ENCODE measurements at regions of chr1 and their contacts with region 1.

Region 1: GRCh38 chr1:47725992-47726855 is 271.0 kb downstream of the TRABD2B start:
- DNase-seq: peak; percentile 7
- ATAC-seq: peak; percentile 98
- H3K4me3 ChIP-seq: no peak overlapping the region
- H3K27ac ChIP-seq: no peak overlapping the region
- H3K4me1 ChIP-seq: no peaks in the 10 kb centered on the region
- H3K27me3 ChIP-seq: peaks cover 5 to 6% of the 10 kb centered on the region in 2 experiments
- CTCF ChIP-seq: peak; percentile 87 to 93 (median 91)
- EP300 ChIP-seq: no peak
- POLR2A ChIP-seq: no peak
- RAD21 ChIP-seq: peak; percentile 68

Region 2: DNA sequence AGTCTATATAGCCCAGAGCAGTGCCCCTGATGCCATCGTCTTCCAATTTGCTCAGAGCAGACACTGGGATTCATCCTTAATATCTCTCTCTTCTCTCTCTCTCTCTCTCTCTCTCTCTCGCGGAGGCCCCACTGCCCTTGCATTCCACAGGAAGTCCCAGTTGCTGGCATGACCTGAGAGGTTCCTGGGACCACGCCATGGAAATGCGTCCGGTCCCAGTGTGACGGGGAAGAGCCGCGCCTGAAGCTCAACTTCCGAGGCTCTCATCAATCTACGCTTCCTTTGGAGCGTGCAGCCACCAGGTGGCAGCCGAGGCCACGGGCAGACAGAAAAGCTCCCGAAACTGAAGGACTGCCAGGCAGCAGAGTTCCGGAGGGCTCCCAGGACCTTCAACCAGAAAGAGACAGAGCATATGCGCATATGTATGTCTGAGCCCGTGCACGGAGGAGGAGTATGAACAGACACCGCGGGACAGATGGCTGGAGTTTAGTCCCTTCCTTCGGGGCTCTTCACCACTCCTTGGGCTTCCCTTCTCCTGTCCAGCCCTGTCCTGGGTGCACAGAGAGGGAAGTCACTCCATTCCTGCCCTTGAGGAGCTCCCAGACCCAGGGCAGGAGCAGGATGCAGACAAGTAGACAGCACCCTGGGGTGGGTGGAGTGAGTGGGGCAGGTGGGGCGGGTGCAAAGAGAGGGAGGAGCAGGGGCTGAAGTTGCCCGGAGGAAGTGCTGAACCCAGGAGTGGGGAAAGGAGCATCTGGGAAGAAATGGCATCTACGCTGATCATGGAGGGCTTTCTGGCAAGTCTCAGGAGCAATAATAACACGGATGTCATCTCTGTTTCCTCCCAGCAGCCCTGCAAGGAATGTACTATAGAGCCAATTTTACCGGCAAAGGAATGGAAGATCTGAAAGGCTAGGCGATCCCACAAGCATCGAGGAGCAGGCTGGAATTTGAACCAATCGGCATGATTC is 546.9 kb before region 1 on chr1:
- CTCF ChIA-PET with region 1: interaction called, 12 read pairs
- POLR2A ChIA-PET with region 1: no interaction called
- RAD21 ChIA-PET with region 1: no interaction called
- SMC1A ChIA-PET with region 1: no interaction called
- in situ Hi-C with region 1: no loop called
- intact Hi-C with region 1: loop called (anchors 1 kb)
- DNase-seq: peak; percentile 60
- ATAC-seq: peak; percentile 92
- H3K4me3 ChIP-seq: peak overlapping the region; percentile 60; the same call in 1 of the 2 replicates
- H3K27ac ChIP-seq: no peak overlapping the region
- H3K4me1 ChIP-seq: peaks cover 3% of the 10 kb centered on the region; the same call in 1 of the 2 replicates
- H3K27me3 ChIP-seq: no peaks in the 10 kb centered on the region
- CTCF ChIP-seq: peak; percentile 93 to 97 (median 95); a peak in 5 of 6 replicates
- EP300 ChIP-seq: no peak
- POLR2A ChIP-seq: peak; percentile 61
- RAD21 ChIP-seq: peak; percentile 68

Region 3: GRCh38 chr1:47388891-47389238 is 337.4 kb before region 1 on chr1:
- CTCF ChIA-PET with region 1: interaction called, 33 read pairs
- POLR2A ChIA-PET with region 1: no interaction called
- RAD21 ChIA-PET with region 1: interaction called, 14 read pairs
- SMC1A ChIA-PET with region 1: interaction called, 8 read pairs
- in situ Hi-C with region 1: no loop called
- intact Hi-C with region 1: loop called (anchors 1 kb)
- DNase-seq: no peak
- ATAC-seq: peak; percentile 95
- H3K4me3 ChIP-seq: no peak overlapping the region
- H3K27ac ChIP-seq: no peak overlapping the region
- H3K4me1 ChIP-seq: no peaks in the 10 kb centered on the region
- H3K27me3 ChIP-seq: no peaks in the 10 kb centered on the region
- CTCF ChIP-seq: peak; percentile 76 to 89 (median 79)
- EP300 ChIP-seq: no peak
- POLR2A ChIP-seq: no peak
- RAD21 ChIP-seq: peak; percentile 67

Region 4: GRCh38 chr1:47432071-47433036 is 293.9 kb before region 1 on chr1:
- CTCF ChIA-PET with region 1: interaction called, 22 read pairs
- POLR2A ChIA-PET with region 1: no interaction called
- RAD21 ChIA-PET with region 1: interaction called, 23 read pairs
- SMC1A ChIA-PET with region 1: interaction called, 12 read pairs
- in situ Hi-C with region 1: no loop called
- intact Hi-C with region 1: loop called (anchors 5 kb)
- DNase-seq: peak; percentile 34
- ATAC-seq: peak; percentile 62
- H3K4me3 ChIP-seq: peak overlapping the region; percentile 54; the same call in 1 of the 2 replicates
- H3K27ac ChIP-seq: peak overlapping the region; percentile 38
- H3K4me1 ChIP-seq: peaks cover 23% of the 10 kb centered on the region
- H3K27me3 ChIP-seq: no peaks in the 10 kb centered on the region
- CTCF ChIP-seq: peak; percentile 77 to 81 (median 80)
- EP300 ChIP-seq: no peak
- POLR2A ChIP-seq: no peak
- RAD21 ChIP-seq: peak; percentile 54; the same call in 1 of the 2 replicates

Region 5: DNA sequence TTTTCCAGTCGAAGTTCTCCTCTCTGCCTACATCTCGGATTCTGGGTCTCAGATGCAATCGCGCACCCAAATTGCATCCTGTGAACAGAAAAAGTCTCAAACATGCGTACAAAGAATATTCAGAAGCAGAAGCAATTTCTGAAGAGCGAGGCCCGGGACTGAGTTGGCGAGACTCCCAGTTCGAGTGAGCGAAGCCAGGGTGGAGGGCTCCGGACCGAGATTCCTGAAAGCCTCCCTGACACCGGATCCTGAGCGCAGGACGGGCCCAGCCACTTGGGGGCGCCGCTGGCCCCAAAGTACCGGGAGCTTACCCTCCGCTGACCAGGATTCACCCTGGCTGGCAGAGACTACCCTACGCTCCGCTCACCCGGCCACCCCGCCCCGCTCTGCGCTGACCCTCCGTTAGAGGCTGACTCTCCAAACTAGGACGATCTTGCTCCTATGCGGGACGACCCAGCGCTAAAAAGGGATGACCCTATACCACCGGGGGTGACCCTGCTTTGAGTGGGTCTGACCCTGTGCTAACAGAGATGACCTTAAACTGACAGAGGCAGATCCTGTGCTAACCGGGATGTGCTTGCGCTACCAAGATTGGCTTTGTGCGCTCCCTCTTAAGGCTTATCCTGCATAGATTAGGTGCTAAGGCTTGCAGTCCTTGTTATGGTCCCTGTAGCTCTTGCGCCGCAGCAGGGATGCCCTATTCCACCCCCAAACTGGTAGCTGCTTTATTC is 276.2 kb before region 1 on chr1:
- CTCF ChIA-PET with region 1: interaction called, 11 read pairs
- POLR2A ChIA-PET with region 1: no interaction called
- RAD21 ChIA-PET with region 1: interaction called, 4 read pairs
- SMC1A ChIA-PET with region 1: no interaction called
- in situ Hi-C with region 1: no loop called
- intact Hi-C with region 1: no loop called
- DNase-seq: no peak
- ATAC-seq: no peak
- H3K4me3 ChIP-seq: no peak overlapping the region
- H3K27ac ChIP-seq: no peak overlapping the region
- H3K4me1 ChIP-seq: no peaks in the 10 kb centered on the region; the same call in 1 of the 2 replicates
- H3K27me3 ChIP-seq: peaks cover 17 to 21% of the 10 kb centered on the region in 2 experiments
- CTCF ChIP-seq: peak; percentile 27 to 38 (median 32); a peak in 2 of 6 replicates
- EP300 ChIP-seq: no peak
- POLR2A ChIP-seq: no peak
- RAD21 ChIP-seq: peak; percentile 8; the same call in 1 of the 2 replicates

Region 6: DNA sequence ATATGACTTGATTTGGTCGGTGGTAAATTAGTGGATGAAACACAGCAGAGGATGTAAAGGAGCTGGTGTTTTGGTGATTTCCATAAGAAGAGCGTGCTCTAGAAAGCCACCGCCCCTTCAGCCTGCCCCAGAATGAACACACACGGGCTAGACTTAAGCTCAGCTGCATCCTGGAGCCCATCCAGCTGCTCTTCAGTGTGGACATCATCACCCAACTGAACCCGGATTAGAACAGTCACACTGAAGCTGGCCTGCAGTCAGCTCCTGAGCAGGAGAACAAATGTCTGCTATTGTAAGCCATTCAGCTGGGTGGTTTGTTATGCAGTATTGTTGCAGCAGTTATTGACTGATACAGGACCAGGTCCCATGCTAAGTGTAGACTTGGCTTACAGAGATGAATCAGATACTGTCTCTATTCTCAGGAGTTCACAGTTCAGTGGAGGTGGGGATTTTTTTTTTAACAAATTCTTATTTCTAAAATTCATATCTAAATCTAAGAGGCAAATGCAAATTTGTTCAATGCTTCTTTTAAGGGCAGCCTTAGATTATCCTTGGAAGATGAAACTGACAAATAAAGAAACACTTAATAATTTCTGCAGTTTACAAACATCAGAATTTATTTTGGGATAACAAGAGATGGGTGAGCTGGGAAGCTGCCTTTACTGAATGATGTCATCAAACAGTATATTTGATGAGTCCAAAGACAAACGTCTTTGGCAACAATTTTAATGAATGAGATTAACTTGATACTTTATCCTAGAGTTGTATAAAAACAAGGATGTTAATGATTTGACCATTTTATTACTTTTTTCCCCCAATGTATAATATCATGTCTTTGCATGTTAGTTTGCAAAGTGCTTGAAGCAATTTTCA is 19.7 kb after region 1 on chr1:
- CTCF ChIA-PET with region 1: interaction called, 14 read pairs
- POLR2A ChIA-PET with region 1: no interaction called
- RAD21 ChIA-PET with region 1: no interaction called
- SMC1A ChIA-PET with region 1: no interaction called
- in situ Hi-C with region 1: no loop called
- intact Hi-C with region 1: no loop called
- DNase-seq: no peak
- ATAC-seq: no peak
- H3K4me3 ChIP-seq: no peak overlapping the region
- H3K27ac ChIP-seq: no peak overlapping the region
- H3K4me1 ChIP-seq: no peaks in the 10 kb centered on the region
- H3K27me3 ChIP-seq: no peaks in the 10 kb centered on the region
- CTCF ChIP-seq: no peak
- EP300 ChIP-seq: no peak
- POLR2A ChIP-seq: no peak
- RAD21 ChIP-seq: no peak